ENCODE measurements at regions of chr11 and their contacts with region 1.

Region 1: DNA sequence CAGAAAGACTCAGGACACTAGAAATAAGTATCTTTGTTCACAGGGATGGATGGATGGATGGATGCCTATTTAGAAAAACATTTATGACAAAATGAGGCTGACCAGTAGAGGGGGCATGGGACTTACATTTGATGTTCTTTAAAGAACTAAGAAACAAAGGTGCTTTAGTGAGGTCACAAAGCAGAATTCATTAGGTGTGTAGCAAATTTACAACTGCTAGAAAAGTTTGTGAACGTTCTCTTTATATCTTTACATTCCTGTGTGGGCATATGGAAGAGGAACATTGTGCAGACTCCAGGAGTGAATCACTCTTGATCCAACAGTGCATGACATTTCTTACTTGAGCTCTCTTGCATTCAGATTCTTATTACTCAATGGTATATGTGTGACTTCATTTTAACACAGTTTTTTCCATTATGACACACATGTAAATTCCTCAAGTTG is 15.8 kb upstream of the SIK2 start:
- DNase-seq: peak; percentile 70
- ATAC-seq: peak; percentile 63
- H3K4me3 Mint-ChIP-seq: no peak overlapping the region
- H3K27ac Mint-ChIP-seq: no peak overlapping the region
- H3K4me1 Mint-ChIP-seq: peaks cover 7% of the 10 kb centered on the region
- H3K27me3 Mint-ChIP-seq: peaks cover 14% of the 10 kb centered on the region

Region 2: DNA sequence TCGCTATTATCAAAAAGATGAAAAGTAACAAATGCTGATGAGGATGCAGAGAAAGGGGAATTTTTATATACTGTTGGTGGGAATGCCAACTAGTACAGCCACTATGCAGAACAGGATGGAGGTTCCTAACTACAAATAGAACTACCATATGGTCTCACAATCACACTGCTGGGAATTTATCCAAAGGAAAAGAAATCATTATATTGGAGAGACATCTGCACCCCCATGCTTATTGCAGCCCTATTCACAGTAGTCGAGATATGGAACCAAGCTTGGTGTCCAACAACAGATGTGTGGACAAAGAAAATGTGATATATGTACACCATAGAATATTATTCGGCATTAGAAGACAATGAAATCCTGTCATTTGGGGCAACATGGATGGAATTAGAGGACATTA is 360.5 kb before region 1 on chr11:
- CTCF ChIA-PET with region 1: no interaction called
- POLR2A ChIA-PET with region 1: no interaction called
- DNase-seq: no peak
- ATAC-seq: no peak
- H3K4me3 Mint-ChIP-seq: no peak overlapping the region
- H3K27ac Mint-ChIP-seq: no peak overlapping the region
- H3K4me1 Mint-ChIP-seq: peaks cover 40% of the 10 kb centered on the region
- H3K27me3 Mint-ChIP-seq: peaks cover 26% of the 10 kb centered on the region

Region 3: GRCh38 chr11:111841370-111842053 is 255.1 kb after region 1 on chr11:
- CTCF ChIA-PET with region 1: interaction called, 26 read pairs
- POLR2A ChIA-PET with region 1: no interaction called
- DNase-seq: peak; percentile 93
- ATAC-seq: peak; percentile 89
- H3K4me3 Mint-ChIP-seq: no peak overlapping the region
- H3K27ac Mint-ChIP-seq: no peak overlapping the region
- H3K4me1 Mint-ChIP-seq: peaks cover 14% of the 10 kb centered on the region
- H3K27me3 Mint-ChIP-seq: no peaks in the 10 kb centered on the region